ENCODE measurements at regions of chr2 and their contacts with region 1.

Region 1: GRCh38 chr2:168002021-168002553 is 245.3 kb downstream of the STK39 start:
- DNase-seq: no peak
- ATAC-seq: peak; percentile 71
- H3K4me3 Mint-ChIP-seq: peak overlapping the region; percentile 37
- H3K27ac Mint-ChIP-seq: peak overlapping the region; percentile 81
- H3K4me1 Mint-ChIP-seq: peaks cover 18% of the 10 kb centered on the region
- H3K27me3 Mint-ChIP-seq: no peaks in the 10 kb centered on the region
- CTCF ChIP-seq: no peak

Region 2: DNA sequence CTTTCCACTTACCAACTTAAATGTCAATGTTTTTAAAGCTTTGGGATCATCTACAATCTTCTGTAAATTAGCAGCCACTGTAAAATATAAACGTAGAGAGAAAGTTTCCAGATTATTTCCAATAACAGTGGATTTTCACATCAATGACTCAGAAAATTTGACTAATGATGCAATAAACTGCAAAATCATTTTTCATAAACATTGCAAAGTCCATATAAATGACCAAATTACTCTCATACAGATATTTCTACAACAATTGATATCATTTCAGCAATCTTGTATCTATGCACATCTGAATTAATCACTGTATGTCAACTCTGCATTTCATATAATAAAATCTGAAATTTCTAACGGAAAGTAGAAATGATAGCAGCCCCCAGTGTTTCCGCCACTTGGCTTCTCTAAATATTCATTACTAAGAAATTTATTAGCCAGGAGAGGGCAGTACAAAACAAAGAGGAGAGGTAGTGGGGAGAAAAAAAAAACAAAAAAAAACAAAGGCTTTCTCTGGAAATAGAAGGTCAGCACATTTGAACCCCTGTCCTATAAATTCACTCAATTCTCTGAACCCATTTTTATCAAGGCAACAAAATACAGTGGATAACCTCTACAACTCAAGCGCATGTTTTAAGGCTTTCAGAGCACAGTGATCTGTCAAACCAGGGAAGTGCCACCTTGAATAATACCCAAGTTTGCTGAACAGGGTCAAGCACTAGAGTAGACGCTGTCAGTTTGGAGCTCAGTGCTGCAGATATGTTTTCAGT is 37.3 kb before region 1 on chr2:
- CTCF ChIA-PET with region 1: no interaction called
- POLR2A ChIA-PET with region 1: no interaction called
- intact Hi-C with region 1: loop called (anchors 5 kb)
- DNase-seq: no peak
- ATAC-seq: no peak
- H3K4me3 Mint-ChIP-seq: no peak overlapping the region
- H3K27ac Mint-ChIP-seq: no peak overlapping the region
- H3K4me1 Mint-ChIP-seq: peaks cover 20% of the 10 kb centered on the region
- H3K27me3 Mint-ChIP-seq: no peaks in the 10 kb centered on the region
- CTCF ChIP-seq: no peak

Region 3: GRCh38 chr2:168039885-168040284 is 37.8 kb after region 1 on chr2:
- CTCF ChIA-PET with region 1: no interaction called
- POLR2A ChIA-PET with region 1: interaction called, 3 read pairs
- intact Hi-C with region 1: loop called (anchors 1 kb)
- DNase-seq: no peak
- ATAC-seq: peak; percentile 30
- H3K4me3 Mint-ChIP-seq: peak overlapping the region; percentile 2
- H3K27ac Mint-ChIP-seq: no peak overlapping the region
- H3K4me1 Mint-ChIP-seq: peaks cover 83% of the 10 kb centered on the region
- H3K27me3 Mint-ChIP-seq: no peaks in the 10 kb centered on the region
- CTCF ChIP-seq: no peak

Region 4: DNA sequence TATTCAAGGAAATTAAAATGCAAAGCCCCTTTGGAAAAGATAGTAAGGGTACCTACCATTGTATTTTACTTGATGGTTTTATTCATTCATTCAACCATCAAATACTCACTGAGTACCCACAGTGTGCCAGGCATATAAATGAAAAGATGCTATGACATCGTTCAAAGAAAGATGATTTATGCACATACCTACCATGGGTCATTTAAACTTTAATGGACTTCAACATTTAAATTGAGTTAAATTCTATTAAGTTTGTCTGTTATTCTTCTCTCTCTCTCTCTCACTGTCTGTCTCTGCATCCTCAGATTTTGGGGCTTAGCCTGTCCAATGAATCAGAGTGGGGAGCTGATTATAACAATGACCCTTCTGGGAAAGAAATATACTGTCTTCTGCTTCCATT is 541.8 kb after region 1 on chr2:
- CTCF ChIA-PET with region 1: no interaction called
- POLR2A ChIA-PET with region 1: interaction called, 11 read pairs
- intact Hi-C with region 1: no loop called
- DNase-seq: no peak
- ATAC-seq: no peak
- H3K4me3 Mint-ChIP-seq: no peak overlapping the region
- H3K27ac Mint-ChIP-seq: no peak overlapping the region
- H3K4me1 Mint-ChIP-seq: peaks cover 7% of the 10 kb centered on the region
- H3K27me3 Mint-ChIP-seq: no peaks in the 10 kb centered on the region
- CTCF ChIP-seq: no peak

Measured in activated B cell treated with CpG ODN at 0.5 μM for 24 hours (primary cell).